CD8-positive, alpha-beta T cell (primary cell): ENCODE measurements at regions of chr17 and their contacts with region 1.

Region 1: DNA sequence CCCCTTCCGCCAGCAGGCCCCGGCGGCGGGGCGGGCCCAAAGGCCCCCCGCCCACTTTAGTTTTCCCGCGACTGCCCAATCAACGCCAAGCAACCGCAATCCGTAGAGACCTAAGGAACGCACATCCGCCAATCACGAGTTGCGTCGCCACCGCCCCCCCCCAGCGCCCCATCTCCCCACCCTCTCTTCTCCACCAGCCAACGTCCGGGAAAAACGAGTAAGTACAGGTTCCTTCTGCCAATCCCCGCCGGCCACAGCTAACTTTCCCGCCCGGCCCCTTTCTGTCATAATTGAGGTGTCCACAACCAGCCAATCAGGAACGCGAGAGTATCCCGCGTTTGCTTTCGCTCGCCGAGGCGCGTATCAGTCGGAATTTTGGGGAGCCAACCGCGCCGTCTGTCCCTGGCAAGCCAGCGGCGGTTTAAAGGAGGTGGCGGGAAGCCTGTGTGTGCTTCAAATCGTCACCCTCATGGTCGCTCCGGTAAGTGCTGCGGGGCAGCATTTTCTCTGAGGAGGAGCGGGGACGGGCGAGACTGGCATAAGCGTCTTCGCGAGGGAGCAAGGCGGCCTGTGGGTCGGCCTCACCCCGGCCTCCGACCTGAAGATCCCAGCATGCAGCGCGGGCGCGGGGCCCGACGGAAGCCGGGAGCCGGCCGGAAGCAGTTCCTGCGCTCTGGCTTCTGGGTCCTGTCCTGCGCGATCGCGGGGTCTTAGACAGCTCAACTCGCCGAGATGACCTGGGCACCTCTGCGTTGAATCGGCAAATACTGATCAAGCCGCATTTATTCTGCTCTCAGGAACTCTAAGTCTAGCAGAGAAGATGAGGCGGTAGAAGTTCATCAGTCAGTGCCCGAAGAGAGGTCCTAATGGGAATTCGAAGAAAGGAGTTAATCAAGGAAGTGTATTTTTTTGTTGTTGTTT is at the start of gene MIS12:
- DNase-seq: peak; percentile 93 to 100 (median 97)
- ATAC-seq: peak; percentile 89
- H3K4me3 ChIP-seq: peak within 1 kb of the TSS; percentile 94
- H3K4me3 Mint-ChIP-seq: peak within 1 kb of the TSS; percentile 94
- H3K27ac ChIP-seq: peak within 1 kb of the TSS; percentile 98 to 99
- H3K27ac Mint-ChIP-seq: peak within 1 kb of the TSS; percentile 95
- H3K4me1 ChIP-seq: peaks cover 28% of the 10 kb centered on the region
- H3K4me1 Mint-ChIP-seq: peaks cover 60% of the 10 kb centered on the region
- H3K27me3 ChIP-seq: no peaks in the 10 kb centered on the region
- H3K27me3 Mint-ChIP-seq: no peaks in the 10 kb centered on the region
- CTCF ChIP-seq: no peak
- total RNA-seq, gene MIS12: 21.9 to 24.4 TPM

Region 2: GRCh38 chr17:3636154-3636907 is 1850.1 kb before region 1 on chr17 and contains the starts of genes CTNS and SHPK:
- CTCF ChIA-PET with region 1: no interaction called
- POLR2A ChIA-PET with region 1: no interaction called
- intact Hi-C with region 1: loop called in 1 of 2 experiments (anchors 10 kb)
- DNase-seq: peak; percentile 86 to 96 (median 94)
- ATAC-seq: peak; percentile 98
- H3K4me3 ChIP-seq: peak within 1 kb of the TSS; percentile 93 to 94
- H3K4me3 Mint-ChIP-seq: peak within 1 kb of the TSS; percentile 97
- H3K27ac ChIP-seq: peak within 1 kb of the TSS; percentile 90 to 99
- H3K27ac Mint-ChIP-seq: peak within 1 kb of the TSS; percentile 99
- H3K4me1 ChIP-seq: peaks cover 8% of the 10 kb centered on the region
- H3K4me1 Mint-ChIP-seq: peaks cover 26% of the 10 kb centered on the region
- H3K27me3 ChIP-seq: no peaks in the 10 kb centered on the region
- H3K27me3 Mint-ChIP-seq: no peaks in the 10 kb centered on the region
- CTCF ChIP-seq: no peak
- total RNA-seq, gene CTNS: 3.1 to 4.2 TPM
- total RNA-seq, gene SHPK: 2.4 to 3.0 TPM

Region 3: DNA sequence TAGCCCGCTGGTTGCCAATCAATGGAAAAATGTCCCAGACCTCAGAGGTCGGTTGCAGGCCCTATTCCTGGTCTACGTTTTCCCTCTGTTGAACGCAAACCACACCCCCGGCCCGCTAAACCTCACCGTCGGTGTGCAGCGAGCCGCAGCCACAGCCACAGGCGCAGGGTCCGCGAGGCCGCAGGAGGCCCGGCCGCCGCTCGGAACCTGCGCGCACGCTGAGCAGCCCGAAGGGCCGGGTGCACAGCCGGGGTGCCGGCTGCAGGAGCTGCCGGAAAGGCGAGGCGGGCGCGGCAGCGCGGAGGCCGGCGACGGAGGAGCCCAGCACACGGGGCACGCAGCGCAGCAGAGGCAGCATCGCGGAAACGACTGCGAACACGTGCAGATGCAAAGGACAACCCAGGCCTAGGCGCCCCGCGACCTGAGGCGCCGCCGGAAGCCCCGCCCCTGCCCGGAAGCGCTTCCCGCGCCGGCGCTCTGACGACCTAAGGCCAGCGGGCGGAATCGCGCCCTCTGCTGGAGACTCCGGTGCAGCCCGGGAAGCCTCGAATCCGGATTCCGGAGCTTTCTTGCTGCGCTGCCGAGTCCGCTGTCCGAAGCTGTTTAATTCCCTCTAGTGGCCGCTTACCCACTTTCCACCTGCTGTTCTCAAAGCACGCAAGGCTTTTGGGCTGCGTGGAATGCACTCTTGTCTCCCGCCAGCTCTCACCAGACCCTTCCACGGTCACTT is 47.6 kb before region 1 on chr17 and contains the start of gene C1QBP:
- CTCF ChIA-PET with region 1: interaction called, 5 read pairs
- POLR2A ChIA-PET with region 1: interaction called, 9 read pairs
- intact Hi-C with region 1: loop called (anchors 1 kb)
- DNase-seq: peak; percentile 87 to 96 (median 91)
- ATAC-seq: peak; percentile 92
- H3K4me3 ChIP-seq: peak within 1 kb of the TSS; percentile 56 to 83
- H3K4me3 Mint-ChIP-seq: peak within 1 kb of the TSS; percentile 81
- H3K27ac ChIP-seq: peak within 1 kb of the TSS; percentile 63 to 86
- H3K27ac Mint-ChIP-seq: peak within 1 kb of the TSS; percentile 93
- H3K4me1 ChIP-seq: peaks cover 30% of the 10 kb centered on the region
- H3K4me1 Mint-ChIP-seq: peaks cover 40% of the 10 kb centered on the region
- H3K27me3 ChIP-seq: no peaks in the 10 kb centered on the region
- H3K27me3 Mint-ChIP-seq: no peaks in the 10 kb centered on the region
- CTCF ChIP-seq: peak; percentile 98
- total RNA-seq, gene C1QBP: 72.0 to 79.9 TPM

Region 4: GRCh38 chr17:5500589-5501391 is 14.3 kb after region 1 on chr17:
- CTCF ChIA-PET with region 1: interaction called, 3 read pairs
- POLR2A ChIA-PET with region 1: interaction called, 14 read pairs
- intact Hi-C with region 1: loop called (anchors 1 kb)
- DNase-seq: peak; percentile 62 to 92 (median 82)
- ATAC-seq: peak; percentile 96
- H3K4me3 ChIP-seq: peak overlapping the region; percentile 65 to 67
- H3K4me3 Mint-ChIP-seq: peak overlapping the region; percentile 97
- H3K27ac ChIP-seq: peak overlapping the region; percentile 47 to 57
- H3K27ac Mint-ChIP-seq: peak overlapping the region; percentile 93
- H3K4me1 ChIP-seq: peaks cover 13% of the 10 kb centered on the region
- H3K4me1 Mint-ChIP-seq: peaks cover 20% of the 10 kb centered on the region
- H3K27me3 ChIP-seq: no peaks in the 10 kb centered on the region
- H3K27me3 Mint-ChIP-seq: no peaks in the 10 kb centered on the region
- CTCF ChIP-seq: no peak

Region 5: DNA sequence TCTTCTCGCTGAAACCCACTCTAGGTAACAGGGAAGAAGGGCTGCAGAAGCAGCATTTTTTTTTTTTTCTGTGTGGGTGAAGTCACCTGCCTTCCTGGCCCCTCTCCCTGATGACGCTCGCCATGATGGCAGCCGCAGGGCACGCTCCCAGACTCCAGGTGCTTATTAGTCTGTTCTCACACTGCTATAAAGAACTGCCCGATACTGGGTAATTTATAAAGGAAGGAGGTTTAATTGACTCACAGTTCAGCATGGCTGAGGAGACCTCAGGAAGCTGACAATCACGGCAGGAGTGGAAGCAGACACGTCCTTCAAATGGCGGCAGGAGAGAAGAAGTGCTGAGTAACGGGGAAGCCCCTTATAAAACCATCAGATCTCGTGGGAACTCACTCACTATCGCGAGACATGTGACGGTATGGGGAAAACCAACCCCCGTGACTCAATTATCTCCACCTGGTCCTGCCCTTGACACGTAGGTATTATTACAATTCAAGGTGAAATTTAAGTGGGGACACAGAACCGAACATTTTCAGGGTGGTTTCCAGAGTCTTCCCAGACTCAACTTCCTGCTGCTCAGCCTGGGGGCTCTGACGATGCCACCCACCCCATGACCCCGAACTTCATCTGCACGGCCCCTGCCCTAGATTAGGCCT is 132.8 kb after region 1 on chr17:
- CTCF ChIA-PET with region 1: no interaction called
- POLR2A ChIA-PET with region 1: no interaction called
- intact Hi-C with region 1: no loop called
- DNase-seq: no peak
- ATAC-seq: no peak
- H3K4me3 ChIP-seq: no peak overlapping the region
- H3K4me3 Mint-ChIP-seq: no peak overlapping the region
- H3K27ac ChIP-seq: no peak overlapping the region
- H3K27ac Mint-ChIP-seq: no peak overlapping the region
- H3K4me1 ChIP-seq: no peaks in the 10 kb centered on the region
- H3K4me1 Mint-ChIP-seq: no peaks in the 10 kb centered on the region
- H3K27me3 ChIP-seq: peaks cover 0 to 3% of the 10 kb centered on the region in 2 experiments
- H3K27me3 Mint-ChIP-seq: peaks cover 25% of the 10 kb centered on the region
- CTCF ChIP-seq: no peak

Region 6: DNA sequence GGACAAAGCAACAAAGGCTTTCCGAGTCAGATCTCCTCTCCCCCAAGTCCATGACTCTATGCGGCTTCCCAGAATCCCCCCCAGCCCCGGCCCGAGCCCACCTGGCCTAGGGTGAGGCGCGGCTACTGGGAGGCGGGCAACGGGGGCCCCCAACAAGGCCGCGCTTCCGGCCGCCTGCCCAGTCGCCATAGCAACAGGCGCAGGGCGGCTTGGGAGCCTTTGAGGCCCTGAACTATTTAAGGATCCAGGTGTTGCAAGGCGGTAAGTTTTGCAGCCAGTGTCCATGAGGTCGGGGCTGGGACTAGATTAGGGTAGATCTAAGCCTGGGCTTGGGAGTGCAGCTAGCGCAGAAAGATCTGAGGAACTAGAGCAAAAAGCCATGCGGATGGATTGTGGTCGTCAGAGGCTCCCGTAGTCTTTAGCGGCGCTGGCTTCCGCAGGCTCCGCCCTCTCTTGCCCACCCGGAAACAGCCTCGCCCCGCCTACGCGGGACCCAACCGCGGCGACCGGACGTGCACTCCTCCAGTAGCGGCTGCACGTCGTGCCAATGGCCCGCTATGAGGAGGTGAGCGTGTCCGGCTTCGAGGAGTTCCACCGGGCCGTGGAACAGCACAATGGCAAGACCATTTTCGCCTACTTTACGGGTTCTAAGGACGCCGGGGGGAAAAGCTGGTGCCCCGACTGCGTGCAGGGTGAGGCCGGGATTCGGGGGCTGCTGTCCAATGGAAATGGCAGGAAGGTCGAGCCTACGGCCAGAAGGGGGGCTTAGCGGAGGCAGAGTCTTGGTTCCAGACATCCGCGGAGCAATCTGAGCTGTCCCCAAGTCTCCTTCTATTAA is 1154.3 kb after region 1 on chr17 and contains the starts of genes KIAA0753 and TXNDC17:
- CTCF ChIA-PET with region 1: no interaction called
- POLR2A ChIA-PET with region 1: no interaction called
- intact Hi-C with region 1: loop called in 1 of 2 experiments (anchors 10 kb)
- DNase-seq: peak; percentile 74 to 96 (median 91)
- ATAC-seq: peak; percentile 88
- H3K4me3 ChIP-seq: peak within 1 kb of the TSS; percentile 77 to 89
- H3K4me3 Mint-ChIP-seq: peak within 1 kb of the TSS; percentile 97
- H3K27ac ChIP-seq: peak within 1 kb of the TSS; percentile 89 to 91
- H3K27ac Mint-ChIP-seq: peak within 1 kb of the TSS; percentile 98
- H3K4me1 ChIP-seq: peaks cover 25% of the 10 kb centered on the region
- H3K4me1 Mint-ChIP-seq: peaks cover 45% of the 10 kb centered on the region
- H3K27me3 ChIP-seq: no peaks in the 10 kb centered on the region
- H3K27me3 Mint-ChIP-seq: no peaks in the 10 kb centered on the region
- CTCF ChIP-seq: no peak
- total RNA-seq, gene KIAA0753: 5.1 to 6.9 TPM
- total RNA-seq, gene TXNDC17: 20.0 to 21.4 TPM